T-cell (primary cell): ENCODE measurements at regions of chr5 and their contacts with region 1.

Region 1: GRCh38 chr5:15013654-15014463 is 142.3 kb upstream of the ANKH start:
- DNase-seq: peak in 1 of 35 experiments; percentile 59
- ATAC-seq: peak in 3 of 4 experiments; percentile 48 to 60 (median 59)
- H3K4me3 ChIP-seq: no peak overlapping the region
- H3K4me3 Mint-ChIP-seq: no peak overlapping the region
- H3K27ac ChIP-seq: no peak overlapping the region
- H3K27ac Mint-ChIP-seq: no peak overlapping the region
- H3K4me1 ChIP-seq: no peaks in the 10 kb centered on the region
- H3K4me1 Mint-ChIP-seq: no peaks in the 10 kb centered on the region
- H3K27me3 ChIP-seq: no peaks in the 10 kb centered on the region
- H3K27me3 Mint-ChIP-seq: peaks cover 0 to 3% of the 10 kb centered on the region in 2 donors

Region 2: DNA sequence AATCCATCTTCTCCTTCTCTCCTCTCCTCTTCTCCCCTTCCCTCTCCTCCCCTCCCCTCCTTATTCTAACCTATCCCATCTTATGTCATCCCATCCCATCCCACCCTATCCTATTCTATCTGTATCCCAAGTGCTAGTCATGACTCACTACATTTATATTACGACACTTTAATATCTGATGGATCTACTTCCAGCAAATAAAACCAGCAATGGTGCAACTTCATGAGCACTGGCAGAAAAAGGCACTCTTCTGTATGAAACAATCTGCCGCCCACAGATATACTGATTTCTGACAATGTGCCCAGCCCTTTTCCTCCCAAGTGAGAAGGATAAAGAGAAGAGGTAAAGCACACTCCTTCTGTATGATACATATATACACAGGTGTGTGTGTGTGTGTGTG is 55.7 kb before region 1 on chr5:
- CTCF ChIA-PET with region 1: interaction called, 3 to 11 read pairs
- POLR2A ChIA-PET with region 1: no interaction called
- DNase-seq: no peak
- ATAC-seq: no peak
- H3K4me3 ChIP-seq: no peak overlapping the region
- H3K4me3 Mint-ChIP-seq: no peak overlapping the region
- H3K27ac ChIP-seq: no peak overlapping the region
- H3K27ac Mint-ChIP-seq: no peak overlapping the region
- H3K4me1 ChIP-seq: no peaks in the 10 kb centered on the region
- H3K4me1 Mint-ChIP-seq: no peaks in the 10 kb centered on the region
- H3K27me3 ChIP-seq: peaks cover 0 to 4% of the 10 kb centered on the region in 2 experiments
- H3K27me3 Mint-ChIP-seq: peaks cover 3 to 4% of the 10 kb centered on the region in 2 donors